Activated naive CD4-positive, alpha-beta T cell treated with anti-CD3 and anti-CD28 coated beads for 36 hours (primary cell): ENCODE measurements at regions of chr13 and their contacts with region 1.

Region 1: GRCh38 chr13:75760131-75761021 is 124.2 kb downstream of the LMO7 start:
- DNase-seq: peak; percentile 31
- H3K4me3 Mint-ChIP-seq: peak overlapping the region; percentile 67
- H3K27ac Mint-ChIP-seq: peak overlapping the region; percentile 11
- H3K4me1 Mint-ChIP-seq: peaks cover 72% of the 10 kb centered on the region
- H3K27me3 Mint-ChIP-seq: peaks cover 4% of the 10 kb centered on the region

Region 2: GRCh38 chr13:75365724-75366173 is 394.6 kb before region 1 on chr13:
- CTCF ChIA-PET with region 1: no interaction called
- intact Hi-C with region 1: loop called (anchors 5 kb)
- DNase-seq: peak; percentile 40
- H3K4me3 Mint-ChIP-seq: peak overlapping the region; percentile 4
- H3K27ac Mint-ChIP-seq: peak overlapping the region; percentile 77
- H3K4me1 Mint-ChIP-seq: peaks cover 35% of the 10 kb centered on the region
- H3K27me3 Mint-ChIP-seq: peaks cover 4% of the 10 kb centered on the region

Region 3: DNA sequence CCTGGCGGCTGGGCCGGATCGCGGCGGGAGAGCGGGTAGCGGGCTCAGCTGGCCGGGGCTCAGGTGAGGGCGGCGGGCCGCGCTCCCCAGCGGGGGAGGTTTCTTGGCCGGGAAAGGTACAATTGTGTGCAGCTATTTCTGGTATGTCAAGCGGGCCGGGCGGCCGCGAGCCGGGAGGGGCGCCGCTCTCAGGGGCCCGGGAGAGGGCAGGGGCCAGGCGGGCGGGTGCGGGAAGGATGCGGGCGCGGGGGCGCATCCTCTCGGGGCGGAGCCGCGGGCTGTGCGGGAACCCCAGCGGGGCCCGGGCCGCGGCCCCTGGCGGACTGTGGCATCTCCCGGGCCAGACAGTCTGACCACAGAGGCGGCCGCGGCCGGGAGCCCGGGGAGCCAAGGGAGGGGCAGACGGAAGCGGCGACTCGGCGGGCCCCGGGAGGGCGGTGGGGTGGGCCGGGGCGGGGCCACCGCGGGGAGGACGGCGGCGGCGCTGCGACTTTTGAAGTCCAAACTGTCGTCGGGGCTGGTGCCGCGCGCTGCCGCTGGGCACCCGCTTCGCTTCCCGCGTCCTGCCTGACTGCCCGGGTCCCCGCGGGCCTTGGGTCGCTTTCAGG is 124.4 kb before region 1 on chr13 and contains the start of gene LMO7:
- CTCF ChIA-PET with region 1: no interaction called
- intact Hi-C with region 1: loop called (anchors 5 kb)
- DNase-seq: peak; percentile 55
- H3K4me3 Mint-ChIP-seq: peak within 1 kb of the TSS; percentile 75
- H3K27ac Mint-ChIP-seq: no peak within 1 kb of the TSS
- H3K4me1 Mint-ChIP-seq: peaks cover 6% of the 10 kb centered on the region
- H3K27me3 Mint-ChIP-seq: peaks cover 12% of the 10 kb centered on the region
- total RNA-seq, gene LMO7: 10.5 to 12.0 TPM

Region 4: GRCh38 chr13:75704579-75705320 is 55.6 kb before region 1 on chr13:
- CTCF ChIA-PET with region 1: no interaction called
- intact Hi-C with region 1: loop called (anchors 1 kb)
- DNase-seq: no peak
- H3K4me3 Mint-ChIP-seq: no peak overlapping the region
- H3K27ac Mint-ChIP-seq: no peak overlapping the region
- H3K4me1 Mint-ChIP-seq: peaks cover 14% of the 10 kb centered on the region
- H3K27me3 Mint-ChIP-seq: no peaks in the 10 kb centered on the region

Region 5: GRCh38 chr13:75782985-75783384 is 22.6 kb after region 1 on chr13:
- CTCF ChIA-PET with region 1: no interaction called
- intact Hi-C with region 1: loop called (anchors 1 kb)
- DNase-seq: no peak
- H3K4me3 Mint-ChIP-seq: no peak overlapping the region
- H3K27ac Mint-ChIP-seq: no peak overlapping the region
- H3K4me1 Mint-ChIP-seq: peaks cover 18% of the 10 kb centered on the region
- H3K27me3 Mint-ChIP-seq: no peaks in the 10 kb centered on the region

Region 6: GRCh38 chr13:75870397-75870903 is 110.1 kb after region 1 on chr13:
- CTCF ChIA-PET with region 1: interaction called, 25 read pairs
- intact Hi-C with region 1: loop called (anchors 1 kb)
- DNase-seq: peak; percentile 15
- H3K4me3 Mint-ChIP-seq: peak overlapping the region; percentile 40
- H3K27ac Mint-ChIP-seq: no peak overlapping the region
- H3K4me1 Mint-ChIP-seq: peaks cover 16% of the 10 kb centered on the region
- H3K27me3 Mint-ChIP-seq: peaks cover 5% of the 10 kb centered on the region